ENCODE measurements at regions of chr9 and their contacts with region 1.

Region 1: GRCh38 chr9:129610473-129611301 is 10.2 kb downstream of the C9orf50 start:
- DNase-seq: peak in 1 of 2 donors; percentile 90
- H3K4me3 ChIP-seq: peak overlapping the region; percentile 63 to 84
- H3K27ac ChIP-seq: peak overlapping the region; percentile 91 to 92
- H3K4me1 ChIP-seq: peaks cover 5 to 46% of the 10 kb centered on the region in 2 donors
- H3K27me3 ChIP-seq: no peaks in the 10 kb centered on the region
- CTCF ChIP-seq: peak; percentile 74 to 100 (median 81)

Region 2: GRCh38 chr9:129131300-129132145 is 479.2 kb before region 1 on chr9:
- intact Hi-C with region 1: loop called (anchors 2 kb)
- DNase-seq: peak in 1 of 2 donors; percentile 87
- H3K4me3 ChIP-seq: no peak overlapping the region
- H3K27ac ChIP-seq: peak overlapping the region in 1 of 2 donors; percentile 1
- H3K4me1 ChIP-seq: peaks cover 0 to 2% of the 10 kb centered on the region in 2 donors
- H3K27me3 ChIP-seq: no peaks in the 10 kb centered on the region
- CTCF ChIP-seq: peak; percentile 98 to 99 (median 99)

Region 3: GRCh38 chr9:129258124-129258822 is 352.4 kb before region 1 on chr9:
- intact Hi-C with region 1: loop called (anchors 5 kb)
- DNase-seq: peak; percentile 71 to 93
- H3K4me3 ChIP-seq: peak overlapping the region; percentile 20 to 53
- H3K27ac ChIP-seq: peak overlapping the region in 1 of 2 donors; percentile 20
- H3K4me1 ChIP-seq: peaks cover 14 to 18% of the 10 kb centered on the region in 2 donors
- H3K27me3 ChIP-seq: no peaks in the 10 kb centered on the region
- CTCF ChIP-seq: no peak

Region 4: DNA sequence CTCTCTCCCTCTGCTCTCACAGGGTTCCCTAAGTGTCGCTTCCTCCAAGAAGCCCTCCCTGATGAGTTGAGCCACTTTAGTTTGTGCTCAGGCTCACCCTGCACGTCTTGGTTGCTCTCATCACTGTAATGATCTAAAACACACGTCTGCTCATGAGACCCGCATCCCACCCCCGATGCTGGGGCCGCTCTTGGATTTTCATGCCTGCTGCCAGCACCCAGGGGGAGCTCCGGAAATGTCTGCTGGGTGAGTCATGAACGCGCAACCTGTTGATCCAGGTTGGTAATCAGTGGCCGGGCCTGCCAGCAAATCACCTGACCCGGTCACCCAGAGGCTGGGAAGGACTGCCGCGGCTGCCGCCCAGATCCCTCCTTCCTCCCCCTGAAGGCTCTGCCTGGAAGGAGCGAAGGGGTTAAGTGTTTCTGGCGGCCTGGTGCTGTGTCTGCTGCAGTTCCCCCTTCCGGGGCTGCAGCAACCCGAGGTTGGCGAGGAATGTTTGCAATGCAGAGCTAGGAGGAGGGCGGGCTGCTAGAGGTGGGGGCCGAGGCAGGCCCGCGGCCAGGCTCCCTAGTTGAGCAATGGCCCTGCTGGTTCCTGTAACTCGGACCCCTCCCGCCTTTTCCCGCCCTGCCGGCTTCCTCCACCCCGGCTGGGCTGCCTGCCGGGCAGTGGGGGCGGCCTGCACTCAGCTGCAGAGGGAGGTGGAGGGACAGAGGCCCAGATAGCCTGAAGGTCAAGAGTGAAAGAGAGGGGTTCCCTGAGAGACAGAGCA is 276.5 kb before region 1 on chr9:
- intact Hi-C with region 1: loop called (anchors 5 kb)
- DNase-seq: peak; percentile 74 to 96
- H3K4me3 ChIP-seq: peak overlapping the region; percentile 9 to 19
- H3K27ac ChIP-seq: peak overlapping the region; percentile 84 to 96
- H3K4me1 ChIP-seq: peaks cover 33 to 52% of the 10 kb centered on the region in 2 donors
- H3K27me3 ChIP-seq: no peaks in the 10 kb centered on the region
- CTCF ChIP-seq: no peak

Region 5: DNA sequence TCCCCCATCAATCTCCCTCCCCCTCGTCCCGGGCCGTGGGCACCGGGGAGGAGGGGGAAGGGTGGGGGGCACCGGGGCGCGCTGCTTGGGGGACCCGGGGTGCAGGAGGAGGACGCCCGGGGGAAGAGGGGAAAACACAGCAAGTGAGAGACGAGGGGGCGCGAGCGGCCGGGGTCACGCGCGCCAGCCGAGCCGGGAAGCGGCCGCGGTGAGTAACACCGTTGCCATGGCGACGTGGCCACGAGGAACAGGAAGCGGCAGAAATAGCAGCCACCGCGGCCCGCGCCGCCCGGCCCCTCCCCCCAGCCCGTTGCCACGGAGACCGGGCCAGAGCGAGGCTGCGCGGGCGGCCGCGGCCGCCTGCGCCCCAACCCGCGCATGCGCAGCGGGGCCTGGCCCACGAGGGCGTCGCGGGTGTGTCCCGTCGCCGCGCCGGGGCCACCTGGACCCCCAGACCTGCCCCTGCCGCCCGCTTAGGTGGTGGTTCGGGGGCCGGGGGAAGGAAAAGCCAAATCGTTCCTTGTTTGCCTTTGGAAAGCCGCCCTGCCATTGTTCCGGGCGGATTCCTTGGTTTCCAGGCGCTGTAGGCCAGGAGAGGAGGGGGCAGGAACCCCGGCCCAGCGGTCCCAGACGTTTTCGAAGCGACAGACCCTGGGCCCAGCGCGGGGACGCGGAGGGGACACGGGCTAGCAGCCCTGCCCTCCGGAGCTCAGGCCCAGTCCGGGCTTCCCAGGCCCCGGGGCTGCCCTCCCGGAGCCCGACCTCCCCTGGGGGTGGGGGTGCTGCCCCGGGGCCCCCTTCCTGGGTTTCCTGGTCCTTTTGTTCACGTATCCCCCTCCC is 196.9 kb before region 1 on chr9:
- intact Hi-C with region 1: loop called (anchors 2 kb)
- DNase-seq: peak; percentile 96 to 99
- H3K4me3 ChIP-seq: peak overlapping the region; percentile 72 to 82
- H3K27ac ChIP-seq: peak overlapping the region; percentile 99 to 100
- H3K4me1 ChIP-seq: peaks cover 12 to 28% of the 10 kb centered on the region in 2 donors
- H3K27me3 ChIP-seq: no peaks in the 10 kb centered on the region
- CTCF ChIP-seq: peak in 2 of 3 experiments; percentile 2 to 26

Region 6: GRCh38 chr9:129550199-129550839 is 60.4 kb before region 1 on chr9:
- intact Hi-C with region 1: loop called (anchors 2 kb)
- DNase-seq: peak in 1 of 2 donors; percentile 93
- H3K4me3 ChIP-seq: peak overlapping the region; percentile 52 to 82
- H3K27ac ChIP-seq: peak overlapping the region; percentile 83 to 94
- H3K4me1 ChIP-seq: peaks cover 17 to 18% of the 10 kb centered on the region in 2 donors
- H3K27me3 ChIP-seq: no peaks in the 10 kb centered on the region
- CTCF ChIP-seq: no peak

Region 7: DNA sequence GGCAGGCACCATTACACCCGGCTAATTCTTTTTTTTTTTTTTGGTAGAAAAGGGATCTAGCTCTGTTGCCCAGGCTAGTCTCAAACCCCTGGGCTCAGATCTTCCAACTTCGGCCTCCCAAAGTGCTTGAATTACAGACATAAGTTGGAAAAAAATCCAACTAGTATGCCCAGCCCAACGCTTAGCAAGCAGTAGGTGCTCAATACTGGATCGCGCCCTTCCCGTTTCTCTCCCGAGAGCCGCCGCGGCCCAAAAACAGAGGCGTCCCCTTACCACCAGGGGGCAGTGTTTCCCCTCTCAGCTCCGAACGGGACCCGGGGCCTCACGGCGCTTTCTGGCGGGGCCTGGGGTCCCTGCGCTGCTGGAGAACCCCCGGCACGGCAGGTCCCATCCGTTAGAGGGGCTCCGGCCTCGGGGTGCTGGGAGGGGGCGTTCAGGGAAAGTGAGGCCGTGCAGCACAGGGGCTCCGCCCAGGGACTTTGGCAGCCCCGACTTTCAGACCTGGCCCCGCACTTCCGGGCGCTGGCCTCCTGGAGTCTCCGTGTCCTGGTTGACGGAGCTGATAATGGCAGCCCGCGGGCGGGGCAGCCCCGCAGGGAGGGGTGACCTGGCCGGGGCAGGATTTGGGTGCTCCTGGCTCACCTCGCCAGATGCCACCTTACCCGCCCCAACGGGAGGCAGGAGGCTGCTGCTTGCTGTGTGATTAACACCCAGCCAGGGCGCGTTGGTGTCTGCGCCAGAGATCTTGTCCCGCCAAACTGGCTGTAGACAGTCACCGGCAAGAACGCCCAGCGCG is 127.0 kb after region 1 on chr9:
- intact Hi-C with region 1: no loop called
- DNase-seq: peak in 1 of 2 donors; percentile 92
- H3K4me3 ChIP-seq: peak overlapping the region; percentile 49 to 82
- H3K27ac ChIP-seq: peak overlapping the region; percentile 47 to 68
- H3K4me1 ChIP-seq: no peaks in the 10 kb centered on the region
- H3K27me3 ChIP-seq: no peaks in the 10 kb centered on the region
- CTCF ChIP-seq: peak; percentile 95 to 97 (median 97)